ENCODE measurements at regions of chr7 and their contacts with region 1.

Region 1: DNA sequence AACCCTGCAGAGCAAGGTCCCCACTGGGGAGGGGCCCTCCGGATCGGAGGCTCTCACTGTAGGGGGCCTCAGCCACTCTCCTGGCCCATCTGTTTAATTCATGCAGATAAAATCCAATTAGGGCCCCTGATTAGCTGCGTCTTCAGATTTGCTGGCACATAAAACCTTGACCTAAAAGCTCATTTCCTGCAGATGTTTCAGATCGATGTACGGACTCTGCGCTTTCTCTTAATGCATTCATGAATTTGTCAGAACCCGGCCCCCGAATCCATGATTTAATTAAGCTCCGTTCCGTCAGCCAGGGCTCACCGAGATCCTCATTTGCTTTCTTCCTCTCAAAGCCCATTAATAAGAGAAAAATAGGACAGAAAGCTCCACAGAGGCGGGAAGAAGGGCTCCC is 40.0 kb upstream of the FOXL3 start:
- DNase-seq: no peak
- H3K4me3 Mint-ChIP-seq: no peak overlapping the region
- H3K27ac Mint-ChIP-seq: no peak overlapping the region
- H3K4me1 Mint-ChIP-seq: no peaks in the 10 kb centered on the region
- H3K27me3 Mint-ChIP-seq: no peaks in the 10 kb centered on the region

Region 2: GRCh38 chr7:220151-220841 is 29.7 kb before region 1 on chr7:
- CTCF ChIA-PET with region 1: no interaction called
- POLR2A ChIA-PET with region 1: no interaction called
- DNase-seq: no peak
- H3K4me3 Mint-ChIP-seq: no peak overlapping the region
- H3K27ac Mint-ChIP-seq: no peak overlapping the region
- H3K4me1 Mint-ChIP-seq: no peaks in the 10 kb centered on the region
- H3K27me3 Mint-ChIP-seq: no peaks in the 10 kb centered on the region

Region 3: DNA sequence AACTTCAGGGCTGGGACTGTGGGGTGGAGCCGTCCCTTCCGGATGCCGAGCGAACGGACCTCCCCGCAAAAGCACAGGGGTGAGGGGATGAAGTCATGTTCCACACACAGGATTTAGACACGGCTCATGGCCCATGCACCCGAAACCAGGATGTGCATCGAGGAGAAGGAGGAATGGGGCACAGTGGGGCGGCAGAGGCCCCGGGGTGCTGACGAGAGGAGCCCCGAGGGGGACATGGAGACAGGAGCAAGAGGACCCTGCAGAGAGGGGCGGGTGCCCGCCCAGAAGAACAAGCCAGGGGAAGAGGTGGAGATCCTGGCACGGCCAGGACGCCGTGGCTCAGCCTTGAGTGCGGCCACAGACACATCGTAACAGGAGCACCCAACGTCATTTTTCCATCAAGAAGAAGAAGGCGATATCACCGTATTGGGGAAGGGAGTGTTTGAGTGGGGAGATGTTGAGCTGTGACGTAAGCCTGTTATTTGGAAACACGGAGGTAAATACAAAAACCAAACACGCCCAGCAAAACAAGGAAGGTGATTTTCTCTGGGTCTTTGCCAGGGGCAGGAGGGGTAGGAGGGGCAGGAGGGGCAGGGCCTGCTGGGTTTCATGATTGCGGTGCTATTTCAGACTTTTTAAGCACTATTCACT is 14.7 kb after region 1 on chr7:
- CTCF ChIA-PET with region 1: interaction called, 23 read pairs
- POLR2A ChIA-PET with region 1: no interaction called
- DNase-seq: no peak
- H3K4me3 Mint-ChIP-seq: no peak overlapping the region
- H3K27ac Mint-ChIP-seq: no peak overlapping the region
- H3K4me1 Mint-ChIP-seq: no peaks in the 10 kb centered on the region
- H3K27me3 Mint-ChIP-seq: no peaks in the 10 kb centered on the region